ENCODE measurements at regions of chr9 and their contacts with region 1.

Region 1: DNA sequence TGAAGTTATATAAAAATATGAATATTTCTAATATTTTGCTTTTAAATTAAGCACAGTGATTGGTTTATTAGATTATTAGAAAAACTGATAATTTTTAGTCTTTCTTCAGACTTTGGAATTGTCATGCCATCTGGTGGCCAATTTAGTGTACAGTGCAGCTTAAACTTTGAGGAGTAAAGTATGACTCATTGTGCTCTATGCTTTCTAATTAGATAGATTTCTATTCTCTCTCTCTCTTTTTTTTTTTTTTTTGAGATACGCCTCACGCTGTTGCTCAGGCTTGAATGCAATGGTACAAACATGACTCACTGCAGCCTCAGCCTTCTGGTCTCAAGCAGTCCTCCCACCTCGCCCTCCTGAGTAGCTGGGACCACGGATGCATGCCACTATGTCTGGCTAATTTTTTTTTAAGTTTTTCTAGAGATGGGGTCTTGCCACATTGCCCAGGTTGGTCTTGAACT is 42.1 kb upstream of the GPR21 start:
- DNase-seq: peak; percentile 31
- ATAC-seq: peak; percentile 58; the same call in 1 of the 2 replicates
- H3K4me3 ChIP-seq: no peak overlapping the region
- H3K27ac ChIP-seq: no peak overlapping the region; the same call in 1 of the 2 replicates
- H3K4me1 ChIP-seq: no peaks in the 10 kb centered on the region
- H3K27me3 ChIP-seq: no peaks in the 10 kb centered on the region
- CTCF ChIP-seq: peak; percentile 59 to 68 (median 61); a peak in 5 of 6 replicates
- POLR2A ChIP-seq: no peak
- RAD21 ChIP-seq: peak; percentile 75

Region 2: GRCh38 chr9:122464633-122465567 is 526.5 kb before region 1 on chr9:
- CTCF ChIA-PET with region 1: interaction called, 3 read pairs
- POLR2A ChIA-PET with region 1: no interaction called
- RAD21 ChIA-PET with region 1: no interaction called
- intact Hi-C with region 1: loop called (anchors 10 kb)
- DNase-seq: peak; percentile 68
- ATAC-seq: peak; percentile 89
- H3K4me3 ChIP-seq: peak overlapping the region; percentile 35 to 50
- H3K27ac ChIP-seq: no peak overlapping the region
- H3K4me1 ChIP-seq: peaks cover 0 to 12% of the 10 kb centered on the region in 2 experiments; a peak in 2 of 4 replicates
- H3K27me3 ChIP-seq: peaks cover 17% of the 10 kb centered on the region
- CTCF ChIP-seq: peak; percentile 79 to 88 (median 86)
- POLR2A ChIP-seq: no peak
- RAD21 ChIP-seq: peak; percentile 93

Region 3: GRCh38 chr9:122904823-122905710 is 86.3 kb before region 1 on chr9 and contains the start of gene RC3H2:
- CTCF ChIA-PET with region 1: no interaction called
- POLR2A ChIA-PET with region 1: no interaction called
- RAD21 ChIA-PET with region 1: no interaction called
- intact Hi-C with region 1: loop called (anchors 10 kb)
- DNase-seq: peak; percentile 100
- ATAC-seq: peak; percentile 96
- H3K4me3 ChIP-seq: peak within 1 kb of the TSS; percentile 89 to 96
- H3K27ac ChIP-seq: peak within 1 kb of the TSS; percentile 80
- H3K4me1 ChIP-seq: peaks cover 0 to 16% of the 10 kb centered on the region in 2 experiments; a peak in 2 of 4 replicates
- H3K27me3 ChIP-seq: no peaks in the 10 kb centered on the region
- CTCF ChIP-seq: no peak
- POLR2A ChIP-seq: peak; percentile 85
- RAD21 ChIP-seq: no peak
- total RNA-seq, gene RC3H2: 53.8 TPM

Region 4: GRCh38 chr9:124743686-124744348 is 1752.4 kb after region 1 on chr9:
- CTCF ChIA-PET with region 1: no interaction called
- POLR2A ChIA-PET with region 1: no interaction called
- RAD21 ChIA-PET with region 1: no interaction called
- intact Hi-C with region 1: no loop called
- DNase-seq: no peak
- ATAC-seq: peak; percentile 40
- H3K4me3 ChIP-seq: no peak overlapping the region
- H3K27ac ChIP-seq: no peak overlapping the region
- H3K4me1 ChIP-seq: peaks cover 15 to 41% of the 10 kb centered on the region in 2 experiments
- H3K27me3 ChIP-seq: no peaks in the 10 kb centered on the region
- CTCF ChIP-seq: no peak
- POLR2A ChIP-seq: no peak
- RAD21 ChIP-seq: no peak

Measured in HCT116 (cell line).